ENCODE measurements at regions of chr2 and their contacts with region 1.

Region 1: DNA sequence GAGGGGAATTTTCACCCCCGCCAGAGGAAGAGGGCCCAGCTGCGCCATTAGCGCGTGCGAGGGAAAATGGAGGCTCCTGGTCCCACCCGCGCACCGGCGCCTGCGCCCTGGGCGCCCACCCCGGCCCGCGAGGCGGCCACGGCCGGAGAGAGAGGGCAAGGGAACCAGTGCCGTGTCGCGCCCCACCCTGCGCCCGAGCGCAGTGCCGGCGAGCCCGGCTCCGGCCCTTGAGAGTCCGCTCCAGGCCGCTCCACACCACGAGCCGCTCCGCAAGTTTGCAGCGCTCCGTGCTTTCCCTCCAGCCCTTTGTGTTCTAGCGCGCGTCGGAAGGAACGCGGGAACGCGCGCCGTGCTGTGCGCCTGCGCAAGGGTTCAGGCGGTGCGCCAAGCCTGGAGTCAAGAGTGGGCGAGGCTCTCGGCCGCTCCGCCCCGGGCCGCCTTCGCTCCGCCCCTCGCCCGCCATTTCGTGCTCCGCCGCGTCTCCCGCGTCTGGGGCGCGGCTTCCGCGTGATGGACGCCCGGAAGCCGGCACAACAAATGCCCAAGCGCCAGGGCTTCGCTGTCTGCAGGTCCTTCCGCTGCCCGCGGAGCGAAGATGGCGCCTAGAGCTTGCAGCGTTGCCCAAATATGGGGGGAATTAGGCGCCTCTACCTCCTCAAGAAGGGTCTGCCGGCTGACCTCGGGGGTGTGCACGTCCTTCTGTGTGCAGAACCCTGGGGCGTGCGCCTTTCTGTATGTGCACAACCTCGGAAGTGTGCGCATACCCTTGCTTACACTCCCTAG is 46.1 kb upstream of the PTMA start:
- DNase-seq: peak; percentile 98 to 99
- ATAC-seq: peak; percentile 86 to 95 (median 86)
- H3K4me3 ChIP-seq: peak overlapping the region; percentile 40
- H3K4me3 Mint-ChIP-seq: peak overlapping the region; percentile 75
- H3K27ac ChIP-seq: peak overlapping the region; percentile 91
- H3K27ac Mint-ChIP-seq: peak overlapping the region; percentile 82 to 94
- H3K4me1 ChIP-seq: peaks cover 56% of the 10 kb centered on the region
- H3K4me1 Mint-ChIP-seq: peaks cover 16 to 31% of the 10 kb centered on the region in 2 donors
- H3K27me3 ChIP-seq: no peaks in the 10 kb centered on the region
- H3K27me3 Mint-ChIP-seq: no peaks in the 10 kb centered on the region
- CTCF ChIP-seq: no peak

Region 2: DNA sequence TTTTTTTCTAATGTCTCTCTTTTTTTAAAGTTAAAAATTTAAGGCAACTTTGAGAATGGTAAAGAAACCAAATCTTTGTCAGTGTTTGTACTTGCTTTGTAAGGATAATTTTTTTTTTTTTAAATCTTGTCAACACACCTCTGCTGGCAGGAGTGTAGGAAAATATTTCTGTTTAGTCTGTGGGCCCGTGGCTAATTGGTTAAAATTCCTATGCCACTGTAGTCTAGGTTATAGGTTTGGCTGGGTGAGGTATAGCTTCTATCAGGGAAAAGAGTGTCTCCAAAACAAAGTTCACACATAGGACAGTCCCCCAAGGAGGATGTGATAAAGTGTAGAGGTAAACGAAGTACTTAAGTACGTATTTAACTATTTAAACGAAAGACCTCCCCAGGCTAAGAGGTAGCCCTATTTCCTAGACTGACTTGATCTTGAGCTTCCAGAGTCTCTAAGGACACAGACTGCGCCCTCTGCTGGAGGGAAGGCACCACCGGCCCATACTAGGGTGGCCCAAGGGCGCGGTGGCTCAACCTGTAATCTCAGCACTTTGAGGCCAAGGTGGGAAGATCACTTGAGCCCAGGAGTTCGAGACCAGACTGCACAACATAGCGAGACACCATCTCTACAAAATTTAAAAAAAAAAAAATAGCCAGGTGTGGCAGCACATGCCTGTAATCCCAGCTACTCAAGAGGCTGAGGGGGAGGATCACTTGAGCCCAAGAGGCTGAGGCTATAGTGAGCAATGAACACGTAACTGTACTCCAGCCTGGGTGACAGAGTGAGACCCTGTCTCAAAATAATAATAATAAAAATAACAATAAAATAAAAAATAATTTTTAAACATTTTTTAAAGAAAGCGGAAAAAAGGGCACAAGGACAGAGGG is 60.6 kb before region 1 on chr2:
- intact Hi-C with region 1: no loop called
- DNase-seq: peak; percentile 72 to 89
- ATAC-seq: peak; percentile 41 to 65 (median 44)
- H3K4me3 ChIP-seq: no peak overlapping the region
- H3K4me3 Mint-ChIP-seq: peak overlapping the region; percentile 71
- H3K27ac ChIP-seq: no peak overlapping the region
- H3K27ac Mint-ChIP-seq: peak overlapping the region; percentile 70 to 76
- H3K4me1 ChIP-seq: peaks cover 23% of the 10 kb centered on the region
- H3K4me1 Mint-ChIP-seq: peaks cover 6 to 15% of the 10 kb centered on the region in 2 donors
- H3K27me3 ChIP-seq: no peaks in the 10 kb centered on the region
- H3K27me3 Mint-ChIP-seq: no peaks in the 10 kb centered on the region
- CTCF ChIP-seq: peak; percentile 91

Region 3: DNA sequence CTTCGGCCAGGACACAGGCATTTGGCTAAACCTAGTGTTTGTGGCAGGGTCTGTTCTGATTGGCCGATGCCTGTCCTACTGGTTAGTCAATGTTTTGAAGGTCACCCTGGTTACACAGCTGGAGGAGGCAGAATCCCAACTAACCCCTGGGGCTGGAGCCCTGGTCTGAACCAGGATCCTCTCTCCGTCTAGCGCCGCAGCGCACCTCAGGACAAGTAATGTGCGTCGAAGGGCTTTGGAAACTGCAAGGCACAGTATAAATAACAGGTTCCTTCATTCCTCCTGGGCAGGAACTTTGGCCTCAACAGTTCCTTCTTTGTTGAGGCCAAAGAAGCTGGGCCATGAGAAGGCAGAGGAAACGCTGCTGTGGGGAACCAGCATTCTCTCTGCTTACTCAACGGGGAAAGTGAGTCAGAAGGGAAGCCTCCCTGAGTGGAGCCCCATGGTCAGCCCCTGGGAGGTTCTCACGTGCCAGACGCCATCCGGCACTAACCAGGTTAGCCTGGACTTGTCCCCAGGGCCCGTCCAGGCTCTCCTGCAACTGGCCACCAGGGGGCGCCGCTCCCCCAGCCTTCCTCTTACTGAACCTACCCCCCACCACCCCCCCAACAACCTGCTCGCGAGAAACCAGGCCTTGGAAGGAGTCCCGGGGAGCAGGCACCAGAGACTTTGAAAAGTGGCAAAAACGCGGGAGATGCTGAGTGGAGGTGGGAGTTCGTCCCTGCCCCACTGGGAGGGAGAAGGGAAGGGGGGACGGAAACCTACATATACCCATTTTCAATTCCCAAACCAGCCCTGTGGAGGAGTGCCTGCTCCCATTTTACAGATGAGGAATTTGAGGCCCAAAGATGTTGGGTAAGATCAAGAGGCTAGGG is 49.8 kb before region 1 on chr2:
- intact Hi-C with region 1: loop called (anchors 5 kb)
- DNase-seq: peak; percentile 84 to 92
- ATAC-seq: peak; percentile 84 to 88 (median 84)
- H3K4me3 ChIP-seq: no peak overlapping the region
- H3K4me3 Mint-ChIP-seq: peak overlapping the region; percentile 58
- H3K27ac ChIP-seq: peak overlapping the region; percentile 65
- H3K27ac Mint-ChIP-seq: peak overlapping the region in 1 of 2 donors; percentile 80
- H3K4me1 ChIP-seq: peaks cover 32% of the 10 kb centered on the region
- H3K4me1 Mint-ChIP-seq: peaks cover 11 to 25% of the 10 kb centered on the region in 2 donors
- H3K27me3 ChIP-seq: peaks cover 2% of the 10 kb centered on the region
- H3K27me3 Mint-ChIP-seq: peaks cover 0 to 20% of the 10 kb centered on the region in 2 donors
- CTCF ChIP-seq: peak; percentile 86

Region 4: DNA sequence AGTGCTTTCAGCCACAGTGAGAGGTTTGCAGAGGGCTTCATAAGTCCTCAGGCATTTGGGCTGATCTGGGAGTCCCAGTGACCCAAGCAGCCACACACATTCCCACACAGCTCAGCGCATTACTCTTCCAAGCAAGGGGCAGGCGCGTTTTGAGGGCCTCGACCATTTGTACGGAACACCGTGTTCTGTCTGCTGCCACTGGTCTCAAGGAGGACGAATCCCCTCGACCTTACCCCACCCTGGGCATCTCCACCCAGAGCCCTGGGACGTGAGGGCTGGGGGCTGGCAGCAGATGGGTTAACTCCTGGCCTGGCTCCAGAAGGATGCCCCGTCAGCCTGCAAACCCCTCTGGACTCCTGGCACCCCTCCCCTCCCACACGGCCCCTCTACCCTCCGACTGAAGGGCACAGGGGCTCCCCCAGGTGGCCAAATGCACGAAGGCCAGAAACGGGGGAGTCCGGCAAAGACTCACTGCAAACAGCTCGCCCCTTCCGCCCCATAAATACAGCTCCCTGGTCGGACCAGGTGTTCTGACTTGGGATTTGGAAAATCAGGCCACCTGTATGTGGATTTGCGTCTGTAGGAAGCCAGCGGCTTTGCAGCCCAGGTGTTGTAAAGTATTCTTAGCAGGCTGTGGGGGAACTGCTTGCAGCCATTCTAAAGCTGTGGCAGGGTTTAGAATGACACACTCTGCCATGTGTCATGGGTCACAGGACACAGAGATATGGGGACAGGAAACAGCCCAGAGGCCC is 12.5 kb after region 1 on chr2:
- intact Hi-C with region 1: loop called (anchors 1 kb)
- DNase-seq: peak; percentile 56 to 72
- ATAC-seq: peak; percentile 74 to 81 (median 78)
- H3K4me3 ChIP-seq: no peak overlapping the region
- H3K4me3 Mint-ChIP-seq: no peak overlapping the region
- H3K27ac ChIP-seq: peak overlapping the region; percentile 69
- H3K27ac Mint-ChIP-seq: peak overlapping the region in 1 of 2 donors; percentile 68
- H3K4me1 ChIP-seq: peaks cover 51% of the 10 kb centered on the region
- H3K4me1 Mint-ChIP-seq: peaks cover 13 to 21% of the 10 kb centered on the region in 2 donors
- H3K27me3 ChIP-seq: no peaks in the 10 kb centered on the region
- H3K27me3 Mint-ChIP-seq: no peaks in the 10 kb centered on the region
- CTCF ChIP-seq: peak; percentile 67

Region 5: GRCh38 chr2:231696007-231696371 is 33.8 kb after region 1 on chr2:
- intact Hi-C with region 1: no loop called
- DNase-seq: no peak
- ATAC-seq: no peak
- H3K4me3 ChIP-seq: no peak overlapping the region
- H3K4me3 Mint-ChIP-seq: no peak overlapping the region
- H3K27ac ChIP-seq: no peak overlapping the region
- H3K27ac Mint-ChIP-seq: no peak overlapping the region
- H3K4me1 ChIP-seq: no peaks in the 10 kb centered on the region
- H3K4me1 Mint-ChIP-seq: no peaks in the 10 kb centered on the region
- H3K27me3 ChIP-seq: no peaks in the 10 kb centered on the region
- H3K27me3 Mint-ChIP-seq: no peaks in the 10 kb centered on the region
- CTCF ChIP-seq: no peak

Region 6: GRCh38 chr2:231706731-231707624 is 44.8 kb after region 1 on chr2:
- intact Hi-C with region 1: loop called (anchors 1 kb)
- DNase-seq: peak; percentile 97 to 98
- ATAC-seq: peak; percentile 37 to 64 (median 50)
- H3K4me3 ChIP-seq: peak overlapping the region; percentile 85
- H3K4me3 Mint-ChIP-seq: peak overlapping the region; percentile 98
- H3K27ac ChIP-seq: peak overlapping the region; percentile 95
- H3K27ac Mint-ChIP-seq: peak overlapping the region; percentile 97 to 100
- H3K4me1 ChIP-seq: peaks cover 34% of the 10 kb centered on the region
- H3K4me1 Mint-ChIP-seq: peaks cover 24 to 37% of the 10 kb centered on the region in 2 donors
- H3K27me3 ChIP-seq: no peaks in the 10 kb centered on the region
- H3K27me3 Mint-ChIP-seq: peaks cover 0 to 6% of the 10 kb centered on the region in 2 donors
- CTCF ChIP-seq: peak; percentile 92

Region 7: DNA sequence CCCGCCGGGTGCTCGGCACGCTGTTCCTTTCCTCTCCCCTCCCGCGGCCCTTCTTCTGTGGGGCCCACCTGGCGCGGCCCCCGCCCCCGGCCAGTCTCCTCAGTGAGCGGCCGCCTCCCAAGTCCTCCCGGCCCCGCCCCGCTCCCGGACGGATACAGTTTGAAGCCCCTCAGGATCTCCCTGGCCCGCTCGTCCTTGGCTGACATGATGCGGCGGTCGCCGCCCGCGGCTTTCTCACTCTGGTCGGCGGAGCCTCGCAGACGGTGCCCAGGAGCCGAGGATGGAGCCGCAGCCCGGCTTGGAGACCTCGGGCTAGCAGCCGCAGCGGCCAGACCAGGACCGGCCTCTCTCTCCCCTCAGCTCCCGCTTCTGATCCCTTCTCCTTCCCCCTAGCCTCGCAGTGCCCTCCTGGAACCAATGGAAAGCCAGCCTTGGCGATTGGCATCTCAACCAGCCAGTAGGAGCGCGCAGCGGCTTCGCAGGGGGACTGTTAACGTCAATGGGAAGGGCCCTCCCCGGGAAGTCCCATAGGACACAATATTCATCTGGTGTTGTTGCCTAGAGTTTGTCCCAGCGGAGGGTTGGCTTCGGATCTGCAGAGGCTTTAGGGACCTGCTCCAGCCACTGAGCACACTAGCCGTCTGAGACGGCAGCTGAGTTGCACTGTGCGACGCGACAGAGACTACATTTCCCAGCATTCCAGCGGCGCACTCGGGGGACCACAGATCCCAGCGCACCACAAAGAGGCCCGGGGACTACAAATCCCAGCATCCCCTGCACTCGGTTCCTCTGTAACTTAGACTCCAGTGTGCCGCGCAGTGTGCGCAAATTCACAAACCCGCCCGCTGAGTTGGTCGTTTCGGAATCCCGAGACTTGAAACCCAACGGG is 118.9 kb after region 1 on chr2 and contains the start of gene PDE6D:
- intact Hi-C with region 1: loop called (anchors 5 kb)
- DNase-seq: peak; percentile 97 to 98
- ATAC-seq: peak; percentile 90 to 96 (median 93)
- H3K4me3 ChIP-seq: peak within 1 kb of the TSS; percentile 86
- H3K4me3 Mint-ChIP-seq: peak within 1 kb of the TSS; percentile 98
- H3K27ac ChIP-seq: peak within 1 kb of the TSS; percentile 89
- H3K27ac Mint-ChIP-seq: peak within 1 kb of the TSS; percentile 98
- H3K4me1 ChIP-seq: peaks cover 18% of the 10 kb centered on the region
- H3K4me1 Mint-ChIP-seq: peaks cover 54 to 63% of the 10 kb centered on the region in 2 donors
- H3K27me3 ChIP-seq: no peaks in the 10 kb centered on the region
- H3K27me3 Mint-ChIP-seq: no peaks in the 10 kb centered on the region
- CTCF ChIP-seq: no peak
- total RNA-seq, gene PDE6D: 21.6 to 29.2 (median 22.8) TPM

Measured in natural killer cell (primary cell).